Activated CD8-positive, alpha-beta T cell treated with anti-CD3 and anti-CD28 coated beads for 36 hours (primary cell): ENCODE measurements at regions of chr12 and their contacts with region 1.

Region 1: DNA sequence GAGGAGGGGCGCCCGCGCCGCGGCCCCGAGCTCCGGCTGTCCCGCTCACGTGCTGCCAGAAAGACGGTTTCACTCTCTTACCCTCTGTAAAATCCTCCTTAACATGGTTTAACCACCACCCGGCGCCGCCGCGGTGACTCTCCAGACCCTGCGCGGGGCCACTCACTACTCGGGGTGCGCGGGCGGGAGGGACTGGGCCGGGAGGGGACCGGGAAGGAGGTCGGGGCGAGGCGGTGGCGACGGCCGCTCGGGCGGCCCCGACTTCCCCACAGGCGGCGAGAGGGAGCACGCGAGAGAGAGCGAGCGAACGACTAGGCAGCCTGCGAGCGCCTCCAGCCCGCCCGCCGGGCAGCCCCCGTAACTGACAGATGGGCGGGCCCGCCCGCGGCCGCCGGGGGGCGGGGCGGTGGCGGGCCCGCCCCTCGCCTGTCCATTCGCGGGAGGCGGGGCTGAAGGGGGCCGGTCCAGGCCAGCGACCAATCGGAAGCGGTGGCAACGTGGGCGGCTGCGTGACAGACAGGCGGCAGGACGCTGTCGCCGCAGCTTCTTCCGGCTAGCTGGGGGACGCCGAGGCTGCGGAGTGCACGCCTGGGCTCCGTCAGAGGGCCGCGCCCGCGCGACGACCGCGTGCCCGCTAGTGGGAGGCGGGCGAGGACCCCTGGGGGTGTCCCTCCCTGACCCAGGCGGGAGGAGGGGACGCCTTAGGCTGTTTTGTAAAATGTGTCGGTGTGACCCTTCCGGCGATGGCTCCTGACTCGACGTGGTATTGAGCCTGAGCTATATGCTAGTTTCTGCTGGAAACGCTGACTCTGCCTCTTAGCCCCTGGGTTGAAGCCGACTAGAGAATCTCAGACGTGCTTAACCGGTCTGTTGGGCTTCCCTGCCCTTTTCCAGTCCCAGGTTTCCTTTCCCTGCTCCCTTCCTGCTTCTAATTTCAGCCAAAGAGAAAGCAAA is at the start of gene EEA1:
- DNase-seq: peak; percentile 98
- ATAC-seq: peak; percentile 82
- H3K4me3 Mint-ChIP-seq: peak within 1 kb of the TSS; percentile 85
- H3K27ac Mint-ChIP-seq: peak within 1 kb of the TSS; percentile 97
- H3K4me1 Mint-ChIP-seq: peaks cover 30% of the 10 kb centered on the region
- H3K27me3 Mint-ChIP-seq: no peaks in the 10 kb centered on the region
- CTCF ChIP-seq: no peak
- total RNA-seq, gene EEA1: 20.8 to 21.7 TPM

Region 2: DNA sequence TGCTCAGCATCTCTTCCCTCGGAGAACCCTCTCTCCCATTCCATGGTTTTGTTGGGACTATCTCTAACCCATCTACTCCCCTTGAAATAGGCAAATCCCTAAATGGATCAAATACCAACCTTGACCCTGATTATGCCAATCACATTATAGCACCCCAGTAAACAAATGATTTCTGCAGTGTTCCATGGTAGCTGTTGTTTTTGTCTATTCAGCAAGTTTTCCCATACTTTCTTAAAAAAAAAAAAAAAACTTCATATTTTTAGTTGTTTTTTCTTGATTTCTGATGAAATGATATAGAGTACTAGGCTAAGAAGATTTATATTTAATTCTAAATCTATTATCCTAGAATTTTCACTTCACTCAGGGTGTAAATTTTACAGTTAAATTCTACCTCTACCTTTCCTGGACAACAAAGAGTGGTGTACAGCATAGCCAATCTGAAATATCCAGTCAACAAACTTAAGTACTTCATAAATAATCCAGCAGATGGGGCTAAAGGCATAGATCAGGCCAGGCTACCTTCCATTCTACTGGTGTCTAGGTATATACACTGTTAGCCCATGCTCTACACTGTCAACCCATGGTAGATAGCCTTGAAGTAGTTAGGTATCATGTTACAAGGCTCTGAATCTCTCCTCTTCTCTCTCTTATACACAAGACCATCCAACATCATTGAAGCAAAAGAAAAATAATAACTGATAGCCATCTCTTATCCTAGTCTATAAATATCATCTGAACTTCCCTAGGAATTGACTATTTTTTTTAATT is 144.3 kb before region 1 on chr12:
- CTCF ChIA-PET with region 1: interaction called, 3 read pairs
- POLR2A ChIA-PET with region 1: interaction called, 5 read pairs
- intact Hi-C with region 1: loop called (anchors 5 kb)
- DNase-seq: peak; percentile 30
- ATAC-seq: peak; percentile 99
- H3K4me3 Mint-ChIP-seq: no peak overlapping the region
- H3K27ac Mint-ChIP-seq: peak overlapping the region; percentile 21
- H3K4me1 Mint-ChIP-seq: peaks cover 3% of the 10 kb centered on the region
- H3K27me3 Mint-ChIP-seq: no peaks in the 10 kb centered on the region
- CTCF ChIP-seq: peak; percentile 61

Region 3: DNA sequence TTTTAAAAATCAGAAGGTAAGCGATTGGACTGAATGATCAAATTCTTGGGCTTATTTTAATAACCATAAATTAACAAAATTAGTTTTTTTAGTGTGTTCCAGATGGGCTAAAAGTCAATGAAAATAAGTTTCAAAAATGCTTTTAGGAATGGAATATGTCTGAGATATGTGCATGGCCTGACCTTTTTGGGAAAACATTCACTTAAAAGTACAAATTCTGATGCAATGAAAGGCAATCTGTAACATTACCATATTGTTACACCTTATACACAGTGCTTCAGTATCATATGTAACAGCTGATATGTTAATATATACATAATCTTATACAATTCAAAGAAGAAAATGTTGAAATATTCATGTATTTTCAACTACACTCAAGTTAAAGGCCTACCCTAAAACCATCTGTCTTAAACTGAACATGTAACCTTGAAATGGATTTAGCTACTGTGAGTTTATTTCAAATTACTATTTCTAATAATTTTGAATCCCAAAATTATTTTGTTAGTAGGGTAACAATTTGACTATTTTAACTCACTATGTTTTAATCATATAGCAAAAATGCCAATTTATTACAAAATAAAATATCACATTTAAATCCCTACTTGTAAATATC is 85.0 kb before region 1 on chr12:
- CTCF ChIA-PET with region 1: interaction called, 3 read pairs
- POLR2A ChIA-PET with region 1: no interaction called
- intact Hi-C with region 1: loop called (anchors 10 kb)
- DNase-seq: no peak
- ATAC-seq: no peak
- H3K4me3 Mint-ChIP-seq: no peak overlapping the region
- H3K27ac Mint-ChIP-seq: no peak overlapping the region
- H3K4me1 Mint-ChIP-seq: peaks cover 1% of the 10 kb centered on the region
- H3K27me3 Mint-ChIP-seq: no peaks in the 10 kb centered on the region
- CTCF ChIP-seq: no peak

Region 4: DNA sequence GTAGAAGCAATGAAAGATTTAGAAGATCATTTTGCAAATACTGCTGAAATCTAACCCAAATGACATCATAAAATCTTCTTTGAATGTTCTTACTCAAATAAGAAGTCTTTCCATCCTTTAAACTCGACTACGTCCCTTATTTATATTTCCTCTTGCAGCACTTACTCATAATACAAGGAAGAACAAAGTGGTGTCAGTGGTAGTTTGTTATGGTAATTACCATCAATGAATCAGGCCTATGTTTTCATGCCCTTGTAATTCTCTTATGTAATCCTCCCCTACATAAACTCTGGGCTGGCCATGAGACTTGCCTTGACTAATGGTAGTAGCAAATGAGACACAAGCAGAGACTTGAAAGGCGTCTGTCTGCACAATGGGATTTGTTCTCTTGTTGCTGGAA is 17.2 kb before region 1 on chr12:
- CTCF ChIA-PET with region 1: interaction called, 6 read pairs
- POLR2A ChIA-PET with region 1: interaction called, 21 read pairs
- intact Hi-C with region 1: loop called (anchors 1 kb)
- DNase-seq: peak; percentile 40
- ATAC-seq: peak; percentile 88
- H3K4me3 Mint-ChIP-seq: no peak overlapping the region
- H3K27ac Mint-ChIP-seq: peak overlapping the region; percentile 85
- H3K4me1 Mint-ChIP-seq: peaks cover 53% of the 10 kb centered on the region
- H3K27me3 Mint-ChIP-seq: no peaks in the 10 kb centered on the region
- CTCF ChIP-seq: no peak

Region 5: DNA sequence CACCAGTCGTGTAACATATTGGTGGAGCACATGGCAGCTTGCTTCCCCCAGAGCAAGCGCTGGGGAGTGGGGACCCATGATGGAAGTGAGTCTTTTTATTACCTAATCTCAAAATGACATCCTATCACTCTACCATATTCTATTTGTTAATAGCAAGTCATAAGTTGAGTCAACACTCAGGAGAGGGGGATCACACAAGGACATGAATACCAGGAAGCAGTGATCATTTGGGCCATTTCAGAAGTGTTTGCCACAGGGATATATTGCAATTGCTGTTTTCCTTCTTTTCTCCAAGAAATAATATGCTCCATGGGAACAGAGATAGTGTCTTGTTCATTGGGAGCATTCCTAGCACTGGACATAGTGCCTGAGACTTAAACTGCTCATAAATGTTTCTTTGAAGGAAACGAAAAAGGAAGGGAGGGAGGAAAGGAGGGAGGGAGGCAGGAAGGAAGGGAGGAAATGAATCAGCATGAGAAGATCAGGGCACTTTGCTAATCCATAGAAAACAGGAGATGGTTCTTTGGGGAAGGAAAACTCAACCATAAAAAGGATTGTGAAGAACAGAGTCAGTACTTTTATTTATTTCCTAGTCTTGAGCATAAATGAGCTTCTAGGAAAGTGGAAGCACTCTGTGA is 39.1 kb after region 1 on chr12:
- CTCF ChIA-PET with region 1: no interaction called
- POLR2A ChIA-PET with region 1: no interaction called
- intact Hi-C with region 1: no loop called
- DNase-seq: no peak
- ATAC-seq: no peak
- H3K4me3 Mint-ChIP-seq: no peak overlapping the region
- H3K27ac Mint-ChIP-seq: no peak overlapping the region
- H3K4me1 Mint-ChIP-seq: no peaks in the 10 kb centered on the region
- H3K27me3 Mint-ChIP-seq: peaks cover 2% of the 10 kb centered on the region
- CTCF ChIP-seq: no peak